Activated naive CD4-positive, alpha-beta T cell treated with anti-CD3 and anti-CD28 coated beads for 36 hours (primary cell): ENCODE measurements at regions of chr11 and their contacts with region 1.

Region 1: GRCh38 chr11:798093-798713 is at the start of gene SLC25A22:
- DNase-seq: peak; percentile 82
- H3K4me3 Mint-ChIP-seq: peak within 1 kb of the TSS; percentile 86
- H3K27ac Mint-ChIP-seq: peak within 1 kb of the TSS; percentile 37
- H3K4me1 Mint-ChIP-seq: peaks cover 15% of the 10 kb centered on the region
- H3K27me3 Mint-ChIP-seq: no peaks in the 10 kb centered on the region
- total RNA-seq, gene SLC25A22: 19.1 to 21.8 TPM

Region 2: DNA sequence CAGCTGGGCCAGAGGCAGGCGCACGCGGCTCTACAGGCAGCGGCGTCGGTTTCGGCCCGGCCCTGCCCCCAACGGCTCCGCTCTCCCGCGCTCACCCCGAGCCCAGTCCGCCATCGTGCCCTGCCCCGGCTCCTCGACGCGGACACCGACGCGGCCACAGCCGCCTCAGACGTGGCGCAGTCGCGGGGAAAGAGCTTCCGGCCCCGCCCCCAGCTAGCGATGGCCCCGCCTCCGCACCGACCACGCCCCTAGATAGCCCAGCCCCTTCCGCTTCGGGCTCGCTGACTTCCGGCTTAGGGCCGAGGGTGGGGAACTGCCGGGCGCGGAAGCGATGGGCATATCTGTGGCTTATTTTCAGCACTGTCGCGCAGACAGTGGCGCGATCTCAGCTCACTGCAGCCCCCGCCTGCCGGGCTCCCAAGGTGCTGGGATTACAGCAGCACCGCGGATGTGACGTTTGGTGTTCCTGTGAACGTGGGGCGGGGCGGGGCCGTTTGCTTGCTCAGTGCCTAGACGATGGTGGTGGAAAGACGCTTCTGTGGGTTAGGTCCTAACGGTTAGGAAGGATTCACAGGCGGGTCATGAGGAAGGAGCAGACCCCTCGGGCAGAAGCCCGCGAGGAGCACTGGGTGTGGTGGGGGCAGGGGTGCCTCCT is 590.9 kb before region 1 on chr11 and contains the starts of genes BET1L and RIC8A:
- CTCF ChIA-PET with region 1: no interaction called
- intact Hi-C with region 1: loop called (anchors 5 kb)
- DNase-seq: peak; percentile 98
- H3K4me3 Mint-ChIP-seq: peak within 1 kb of the TSS; percentile 96
- H3K27ac Mint-ChIP-seq: peak within 1 kb of the TSS; percentile 98
- H3K4me1 Mint-ChIP-seq: peaks cover 69% of the 10 kb centered on the region
- H3K27me3 Mint-ChIP-seq: no peaks in the 10 kb centered on the region
- total RNA-seq, gene BET1L: 50.4 to 51.6 TPM
- total RNA-seq, gene RIC8A: 74.9 to 85.0 TPM

Region 3: GRCh38 chr11:560305-561147 is 237.7 kb before region 1 on chr11 and contains the starts of genes LMNTD2 and RASSF7:
- CTCF ChIA-PET with region 1: no interaction called
- intact Hi-C with region 1: loop called (anchors 5 kb)
- DNase-seq: peak; percentile 95
- H3K4me3 Mint-ChIP-seq: peak within 1 kb of the TSS; percentile 84
- H3K27ac Mint-ChIP-seq: peak within 1 kb of the TSS; percentile 76
- H3K4me1 Mint-ChIP-seq: peaks cover 12% of the 10 kb centered on the region
- H3K27me3 Mint-ChIP-seq: peaks cover 3% of the 10 kb centered on the region
- total RNA-seq, gene LMNTD2: 4.5 to 5.2 TPM
- total RNA-seq, gene RASSF7: 8.3 to 9.9 TPM

Region 4: DNA sequence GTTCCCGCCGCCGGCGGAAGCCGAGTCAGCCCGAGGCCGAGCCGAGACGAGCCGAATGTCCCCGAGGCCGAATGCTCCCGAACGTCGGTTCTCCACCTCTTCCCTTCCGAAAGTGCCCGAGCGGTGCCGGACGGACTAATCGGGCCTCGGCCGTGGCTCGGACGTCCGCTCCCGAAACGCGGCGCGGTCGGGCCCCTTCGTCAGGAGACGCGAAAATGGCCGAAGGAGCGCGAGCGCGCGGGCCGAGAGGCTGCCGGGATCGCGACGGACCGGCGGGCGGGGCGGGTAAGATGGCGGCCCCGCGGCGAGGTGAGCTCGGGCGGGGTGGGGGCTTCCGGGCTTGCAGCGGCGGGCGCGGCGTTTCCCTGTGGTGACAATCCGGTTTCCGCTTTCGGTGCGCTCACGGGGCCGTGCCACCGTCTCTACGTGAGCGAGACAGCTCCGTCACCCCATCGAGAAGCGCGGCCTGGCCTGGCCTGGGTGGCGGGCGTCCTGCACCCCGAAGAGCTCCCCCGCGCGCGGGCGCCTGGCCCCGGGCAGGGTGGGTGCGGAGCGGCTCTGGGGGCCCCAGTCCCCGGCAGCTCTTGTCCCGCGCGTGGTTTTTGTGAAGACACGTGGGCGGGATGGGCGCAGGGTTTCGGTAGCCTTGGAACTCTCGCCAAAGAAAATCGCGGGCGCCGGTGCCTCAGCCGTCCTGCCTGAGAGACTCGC is 102.5 kb before region 1 on chr11 and contains the start of gene TMEM80:
- CTCF ChIA-PET with region 1: no interaction called
- intact Hi-C with region 1: loop called (anchors 1 kb)
- DNase-seq: peak; percentile 99
- H3K4me3 Mint-ChIP-seq: peak within 1 kb of the TSS; percentile 83
- H3K27ac Mint-ChIP-seq: peak within 1 kb of the TSS; percentile 93
- H3K4me1 Mint-ChIP-seq: peaks cover 54% of the 10 kb centered on the region
- H3K27me3 Mint-ChIP-seq: no peaks in the 10 kb centered on the region
- total RNA-seq, gene TMEM80: 5.6 to 6.0 TPM

Region 5: GRCh38 chr11:747158-748006 is 50.8 kb before region 1 on chr11 and contains the start of gene TALDO1:
- CTCF ChIA-PET with region 1: interaction called, 3 read pairs
- intact Hi-C with region 1: loop called (anchors 1 kb)
- DNase-seq: peak; percentile 86
- H3K4me3 Mint-ChIP-seq: peak within 1 kb of the TSS; percentile 84
- H3K27ac Mint-ChIP-seq: peak within 1 kb of the TSS; percentile 83
- H3K4me1 Mint-ChIP-seq: peaks cover 21% of the 10 kb centered on the region
- H3K27me3 Mint-ChIP-seq: no peaks in the 10 kb centered on the region
- total RNA-seq, gene TALDO1: 327 to 360 TPM

Region 6: GRCh38 chr11:809287-810039 is 11.3 kb after region 1 on chr11 and contains the start of gene RPLP2:
- CTCF ChIA-PET with region 1: interaction called, 3 read pairs
- intact Hi-C with region 1: loop called (anchors 1 kb)
- DNase-seq: peak; percentile 99
- H3K4me3 Mint-ChIP-seq: peak within 1 kb of the TSS; percentile 84
- H3K27ac Mint-ChIP-seq: peak within 1 kb of the TSS; percentile 97
- H3K4me1 Mint-ChIP-seq: peaks cover 33% of the 10 kb centered on the region
- H3K27me3 Mint-ChIP-seq: no peaks in the 10 kb centered on the region
- total RNA-seq, gene RPLP2: 3,807 to 3,940 TPM

Region 7: DNA sequence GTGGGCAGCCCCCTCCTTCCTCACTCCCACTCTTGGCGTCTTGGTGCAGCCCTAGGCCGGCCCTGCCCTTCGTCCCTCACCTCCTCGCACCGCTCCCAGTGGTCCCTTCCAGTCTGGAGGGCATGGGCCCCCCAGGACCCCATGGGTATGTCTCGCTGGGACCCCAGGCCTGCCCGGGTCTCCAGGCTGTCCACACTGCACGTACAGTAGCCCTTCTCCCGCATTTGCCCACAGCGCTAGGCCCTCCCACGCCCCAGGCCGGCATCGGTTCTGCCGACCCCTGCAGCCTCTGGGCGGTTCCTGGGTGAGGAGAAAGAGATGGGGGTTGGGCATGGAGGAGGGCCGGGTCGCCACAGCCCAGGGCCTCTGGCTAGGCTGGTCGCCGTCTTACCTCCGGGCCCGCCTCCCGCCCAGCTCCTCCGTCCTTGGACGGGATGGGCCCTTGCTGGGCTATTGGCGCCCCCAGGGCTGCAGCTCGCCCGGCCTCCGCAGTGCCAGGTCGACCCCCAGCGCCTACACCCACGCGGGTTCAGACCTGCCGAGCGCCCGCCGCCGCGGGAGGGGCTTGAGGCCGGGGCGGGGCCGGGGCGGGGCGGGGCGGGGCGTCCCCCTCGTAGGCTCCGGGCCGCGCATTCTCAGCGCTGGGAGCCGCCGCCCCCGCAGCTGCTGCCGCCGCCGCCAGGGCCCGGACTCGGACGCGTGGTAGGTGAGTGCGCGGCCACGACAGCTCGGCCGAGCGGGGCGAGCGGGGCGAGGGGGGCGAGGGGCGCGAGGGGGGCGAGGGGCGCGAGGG is 34.3 kb after region 1 on chr11 and contains the start of gene CD151:
- CTCF ChIA-PET with region 1: no interaction called
- intact Hi-C with region 1: no loop called
- DNase-seq: peak; percentile 34
- H3K4me3 Mint-ChIP-seq: peak within 1 kb of the TSS; percentile 55
- H3K27ac Mint-ChIP-seq: no peak within 1 kb of the TSS
- H3K4me1 Mint-ChIP-seq: peaks cover 35% of the 10 kb centered on the region
- H3K27me3 Mint-ChIP-seq: peaks cover 40% of the 10 kb centered on the region
- total RNA-seq, gene CD151: 16.3 to 18.1 TPM

Region 8: DNA sequence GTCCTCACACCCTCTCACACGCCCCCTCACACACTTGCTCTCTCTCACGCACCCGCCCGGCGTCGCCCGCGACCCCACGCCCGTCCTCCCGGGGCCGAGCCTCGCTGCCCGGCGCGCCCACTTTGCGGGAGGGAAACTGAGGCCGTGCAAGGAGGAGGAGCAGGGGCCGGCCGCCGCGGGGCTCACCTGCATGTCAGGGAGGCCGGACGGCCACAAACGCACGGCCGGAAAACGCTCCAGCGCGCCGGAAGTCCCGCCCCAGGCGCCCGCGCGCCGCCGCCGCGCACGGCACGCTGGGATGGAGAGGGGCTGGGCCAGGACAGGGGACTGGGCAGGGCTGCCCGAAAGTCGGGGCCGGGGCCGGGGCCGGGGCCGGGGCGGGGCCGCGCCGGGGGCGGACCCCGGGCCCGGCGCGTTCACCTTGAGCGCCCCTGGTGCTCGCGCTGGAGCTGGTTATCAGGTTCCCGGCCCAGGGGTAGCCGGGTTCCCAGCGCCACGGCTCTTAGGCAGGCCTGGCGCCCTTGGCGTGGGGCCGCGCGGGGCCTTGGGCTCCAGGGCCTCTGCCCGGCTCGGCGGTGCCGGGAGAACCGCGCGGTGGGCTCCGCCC is 112.5 kb after region 1 on chr11 and contains the start of gene CHID1:
- CTCF ChIA-PET with region 1: no interaction called
- intact Hi-C with region 1: loop called (anchors 2 kb)
- DNase-seq: peak; percentile 87
- H3K4me3 Mint-ChIP-seq: peak within 1 kb of the TSS; percentile 91
- H3K27ac Mint-ChIP-seq: peak within 1 kb of the TSS; percentile 65
- H3K4me1 Mint-ChIP-seq: peaks cover 24% of the 10 kb centered on the region
- H3K27me3 Mint-ChIP-seq: no peaks in the 10 kb centered on the region
- total RNA-seq, gene CHID1: 51.8 to 56.3 TPM

Region 9: GRCh38 chr11:942823-943222 is 144.6 kb after region 1 on chr11:
- CTCF ChIA-PET with region 1: no interaction called
- intact Hi-C with region 1: no loop called
- DNase-seq: no peak
- H3K4me3 Mint-ChIP-seq: no peak overlapping the region
- H3K27ac Mint-ChIP-seq: peak overlapping the region; percentile 60
- H3K4me1 Mint-ChIP-seq: peaks cover 38% of the 10 kb centered on the region
- H3K27me3 Mint-ChIP-seq: no peaks in the 10 kb centered on the region